ENCODE measurements at regions of chr6 and their contacts with region 1.

Region 1: DNA sequence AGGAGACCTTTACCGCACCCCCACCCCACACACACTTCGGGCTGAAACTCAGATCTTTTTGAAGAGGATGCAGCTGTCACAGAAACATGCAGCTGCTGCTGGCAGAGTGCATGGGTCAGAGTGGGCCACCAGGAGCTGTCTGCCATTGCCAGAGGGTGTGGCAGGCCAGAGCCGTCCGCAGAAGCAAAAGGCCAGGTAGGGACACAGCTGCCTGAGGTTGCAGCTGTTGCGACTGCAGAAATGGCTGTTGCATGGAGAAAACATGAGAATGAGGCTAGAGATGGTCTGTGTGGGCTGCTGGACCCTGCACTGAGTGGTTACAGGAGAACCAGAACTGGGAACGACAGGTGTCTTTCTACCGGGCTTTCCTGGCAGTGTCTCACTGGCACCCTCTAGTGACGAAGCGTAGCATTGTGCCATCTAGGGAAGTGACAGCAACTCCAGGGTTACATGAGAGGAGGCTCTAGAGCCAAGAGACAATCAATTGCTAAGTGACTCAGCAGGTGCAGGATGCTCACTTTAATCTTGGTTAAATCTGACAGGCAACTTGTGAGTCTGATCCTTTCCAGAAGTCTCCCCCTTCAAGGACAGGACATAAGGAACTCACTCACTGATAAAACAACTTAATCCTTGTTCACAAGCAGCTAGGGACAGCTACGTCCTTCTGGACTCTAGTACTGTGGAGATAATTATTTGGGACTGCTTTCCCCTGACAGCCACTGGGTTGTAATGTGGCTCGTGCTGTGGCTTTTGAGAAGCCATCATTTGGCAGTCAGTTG is 29.1 kb upstream of the SERPINB9 start:
- DNase-seq: peak; percentile 91
- ATAC-seq: peak; percentile 91
- H3K4me3 Mint-ChIP-seq: no peak overlapping the region
- H3K27ac Mint-ChIP-seq: no peak overlapping the region
- H3K4me1 Mint-ChIP-seq: peaks cover 22% of the 10 kb centered on the region
- H3K27me3 Mint-ChIP-seq: no peaks in the 10 kb centered on the region

Region 2: DNA sequence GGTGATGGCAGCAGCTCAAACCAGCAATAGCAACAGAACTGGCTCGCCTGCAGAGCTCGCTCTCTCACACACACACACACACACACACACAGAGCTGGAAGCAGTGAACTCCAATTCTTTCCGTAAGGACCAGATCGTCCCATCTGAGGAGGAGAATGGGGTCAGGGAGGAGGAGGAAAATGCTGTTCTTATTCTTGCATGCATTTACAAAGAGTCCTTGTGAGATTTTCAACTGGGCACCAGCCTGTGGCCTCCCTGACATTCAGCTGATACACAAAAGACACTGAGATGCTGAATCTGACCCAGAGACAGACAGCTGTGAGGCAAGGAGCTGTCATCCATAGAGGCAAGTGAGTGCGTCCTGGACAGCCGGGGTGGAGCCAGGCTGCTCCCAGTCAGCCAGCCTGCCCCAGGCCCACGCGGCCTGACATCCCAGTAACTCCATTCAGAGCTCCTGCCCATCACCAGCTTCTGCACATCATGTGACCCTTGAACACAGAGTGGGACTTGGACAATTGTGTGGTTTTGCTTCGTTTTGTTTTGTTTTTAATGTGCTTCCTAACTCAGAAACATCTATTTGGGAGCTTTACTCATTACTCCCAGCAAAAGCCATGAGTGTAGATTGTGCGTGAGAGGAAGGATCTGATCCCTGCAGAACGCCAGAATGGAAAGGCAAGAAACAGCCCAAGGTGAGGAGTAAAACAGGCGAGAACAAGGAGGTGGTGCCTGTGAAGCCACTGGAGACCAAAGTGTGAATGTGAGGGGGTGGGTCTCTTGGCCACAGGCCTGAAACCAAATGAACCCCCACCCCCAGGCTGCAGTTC is 31.1 kb before region 1 on chr6:
- CTCF ChIA-PET with region 1: interaction called, 29 read pairs
- POLR2A ChIA-PET with region 1: interaction called, 8 read pairs
- DNase-seq: peak; percentile 21
- ATAC-seq: no peak
- H3K4me3 Mint-ChIP-seq: peak overlapping the region; percentile 94
- H3K27ac Mint-ChIP-seq: peak overlapping the region; percentile 62
- H3K4me1 Mint-ChIP-seq: peaks cover 53% of the 10 kb centered on the region
- H3K27me3 Mint-ChIP-seq: no peaks in the 10 kb centered on the region

Region 3: DNA sequence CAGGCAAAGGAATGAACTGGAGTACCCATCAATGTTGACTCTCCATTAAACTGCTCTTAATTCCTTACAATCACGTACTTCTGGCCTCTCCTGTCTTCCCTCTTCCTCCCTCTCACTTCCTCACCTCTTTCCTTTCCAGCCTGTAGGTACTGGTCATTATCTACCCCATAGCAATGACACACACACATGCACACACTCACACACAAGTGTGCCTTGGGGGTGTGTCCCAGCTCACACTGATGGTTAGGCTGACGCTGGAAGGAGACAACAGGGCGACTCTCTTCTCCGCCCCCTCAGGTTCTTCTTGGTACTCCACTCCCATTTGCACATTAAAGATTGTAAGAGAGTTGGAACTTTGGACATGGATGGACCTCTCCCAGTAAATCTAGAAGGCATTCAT is 15.1 kb before region 1 on chr6:
- CTCF ChIA-PET with region 1: interaction called, 38 read pairs
- POLR2A ChIA-PET with region 1: no interaction called
- DNase-seq: peak; percentile 18
- ATAC-seq: no peak
- H3K4me3 Mint-ChIP-seq: no peak overlapping the region
- H3K27ac Mint-ChIP-seq: no peak overlapping the region
- H3K4me1 Mint-ChIP-seq: peaks cover 24% of the 10 kb centered on the region
- H3K27me3 Mint-ChIP-seq: peaks cover 3% of the 10 kb centered on the region